Activated CD4-positive, alpha-beta T cell treated with anti-CD3 and anti-CD28 coated beads for 36 hours (primary cell): ENCODE measurements at regions of chr22 and their contacts with region 1.

Region 1: DNA sequence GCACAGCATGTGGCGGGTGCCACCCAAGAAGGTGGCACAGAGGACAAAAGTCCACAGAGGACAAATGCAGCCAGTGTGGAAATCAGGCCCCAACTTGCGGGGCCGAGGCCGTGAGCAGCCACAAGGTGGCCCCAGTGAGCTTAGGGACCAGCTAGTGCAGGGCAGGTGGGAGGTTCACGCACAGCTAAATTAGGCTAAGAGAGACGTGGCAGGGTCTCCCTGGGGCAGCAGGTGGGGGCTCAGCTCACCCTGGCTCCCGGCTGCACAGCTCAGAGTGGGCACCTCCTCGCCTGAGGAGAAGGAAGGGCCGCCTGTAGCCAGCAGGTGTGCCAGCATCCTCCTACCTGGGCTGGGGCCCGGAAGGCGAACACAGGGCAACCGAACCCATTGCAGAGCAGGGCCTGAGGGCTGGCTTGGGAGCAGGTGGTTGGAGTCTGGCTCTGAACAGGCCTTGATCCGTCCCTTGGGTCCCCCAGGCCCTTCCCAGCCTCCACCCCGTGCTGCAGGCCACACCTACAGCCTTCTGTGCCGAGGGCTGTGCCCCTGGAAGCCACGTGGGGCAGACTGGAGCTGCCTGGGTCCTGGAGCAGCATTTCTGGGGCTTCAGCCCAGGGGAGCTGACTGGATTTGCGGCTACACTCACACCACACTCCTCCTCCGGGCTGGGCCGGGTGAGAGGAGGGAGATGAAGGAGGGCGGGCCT is 26.1 kb upstream of the CELSR1 start:
- DNase-seq: peak; percentile 90
- ATAC-seq: peak; percentile 87
- H3K4me3 Mint-ChIP-seq: peak overlapping the region; percentile 33
- H3K27ac Mint-ChIP-seq: peak overlapping the region; percentile 51
- H3K4me1 Mint-ChIP-seq: peaks cover 9% of the 10 kb centered on the region
- H3K27me3 Mint-ChIP-seq: no peaks in the 10 kb centered on the region

Region 2: GRCh38 chr22:46604306-46604690 is 40.8 kb after region 1 on chr22:
- CTCF ChIA-PET with region 1: no interaction called
- POLR2A ChIA-PET with region 1: interaction called, 3 read pairs
- intact Hi-C with region 1: loop called (anchors 2 kb)
- DNase-seq: peak; percentile 91
- ATAC-seq: peak; percentile 99
- H3K4me3 Mint-ChIP-seq: peak overlapping the region; percentile 64
- H3K27ac Mint-ChIP-seq: peak overlapping the region; percentile 99
- H3K4me1 Mint-ChIP-seq: peaks cover 16% of the 10 kb centered on the region
- H3K27me3 Mint-ChIP-seq: no peaks in the 10 kb centered on the region

Region 3: DNA sequence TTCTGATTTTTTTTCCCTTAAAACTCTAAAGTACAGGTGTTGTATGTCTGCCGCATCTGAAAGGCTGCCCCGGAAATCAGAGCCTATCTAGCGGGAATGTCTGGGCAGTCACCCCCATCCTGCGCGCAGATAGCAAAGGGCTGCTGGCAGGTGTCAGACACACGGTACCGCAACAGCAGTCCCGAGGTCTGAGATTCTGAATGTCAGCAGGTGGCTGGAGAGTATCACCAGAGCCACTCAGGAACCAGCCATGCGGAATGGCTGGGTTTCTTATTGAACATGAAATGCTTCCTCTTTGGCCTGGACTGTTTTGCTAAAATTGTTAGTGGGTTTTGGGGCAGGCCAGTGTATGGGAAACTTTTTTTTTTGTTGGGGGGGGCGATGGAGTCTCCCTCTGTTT is 121.2 kb after region 1 on chr22:
- CTCF ChIA-PET with region 1: interaction called, 19 read pairs
- POLR2A ChIA-PET with region 1: no interaction called
- intact Hi-C with region 1: loop called in 1 of 2 experiments (anchors 1 kb)
- DNase-seq: no peak
- ATAC-seq: no peak
- H3K4me3 Mint-ChIP-seq: no peak overlapping the region
- H3K27ac Mint-ChIP-seq: peak overlapping the region; percentile 74
- H3K4me1 Mint-ChIP-seq: peaks cover 29% of the 10 kb centered on the region
- H3K27me3 Mint-ChIP-seq: no peaks in the 10 kb centered on the region